Endothelial cell of umbilical vein (primary cell): ENCODE measurements at regions of chr7 and their contacts with region 1.

Region 1: GRCh38 chr7:25851332-25852210 is 300.4 kb upstream of the NFE2L3 start:
- DNase-seq: peak; percentile 79
- H3K4me3 ChIP-seq: no peak overlapping the region
- H3K27ac ChIP-seq: no peak overlapping the region
- H3K4me1 ChIP-seq: peaks cover 30% of the 10 kb centered on the region
- H3K27me3 ChIP-seq: peaks cover 9 to 11% of the 10 kb centered on the region in 2 experiments
- CTCF ChIP-seq: peak; percentile 77 to 87
- POLR2A ChIP-seq: no peak

Region 2: GRCh38 chr7:25259587-25260243 is 591.9 kb before region 1 on chr7:
- CTCF ChIA-PET with region 1: interaction called, 17 read pairs
- POLR2A ChIA-PET with region 1: no interaction called
- dilution Hi-C with region 1: no loop called
- intact Hi-C with region 1: loop called (anchors 1 kb)
- DNase-seq: peak; percentile 61
- H3K4me3 ChIP-seq: no peak overlapping the region
- H3K27ac ChIP-seq: no peak overlapping the region
- H3K4me1 ChIP-seq: no peaks in the 10 kb centered on the region
- H3K27me3 ChIP-seq: no peaks in the 10 kb centered on the region
- CTCF ChIP-seq: peak; percentile 77 to 82
- POLR2A ChIP-seq: no peak

Region 3: DNA sequence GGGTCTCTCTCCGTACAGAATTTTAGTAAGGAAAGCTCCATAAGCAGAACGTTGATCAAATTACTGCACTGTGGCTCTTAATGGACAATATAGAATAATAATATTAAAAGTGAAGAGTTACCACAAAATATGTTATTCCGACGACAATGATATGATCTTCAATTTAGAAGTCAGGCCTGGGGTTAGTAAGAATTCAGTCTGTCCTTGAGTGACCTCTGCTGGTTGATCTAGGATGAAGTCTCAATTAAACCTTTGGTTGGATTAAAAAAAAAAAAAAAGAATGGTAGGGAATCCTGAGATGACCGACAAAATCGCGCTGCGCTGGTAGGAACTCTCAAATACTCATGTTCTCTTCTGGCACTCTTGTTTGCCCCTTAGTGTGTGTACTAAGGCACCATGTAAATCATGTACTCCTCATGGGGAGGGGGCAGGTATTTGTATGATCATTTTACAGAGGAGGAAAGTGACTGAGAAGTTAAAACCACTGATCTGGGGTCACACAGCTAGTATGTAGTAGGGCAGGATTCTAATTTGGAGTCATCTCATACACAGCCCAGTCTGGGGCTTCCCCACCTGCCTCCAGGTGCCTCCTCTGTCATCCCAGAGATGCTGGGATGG is 462.0 kb before region 1 on chr7:
- CTCF ChIA-PET with region 1: interaction called, 27 read pairs
- POLR2A ChIA-PET with region 1: no interaction called
- dilution Hi-C with region 1: no loop called
- intact Hi-C with region 1: loop called (anchors 1 kb)
- DNase-seq: peak; percentile 44
- H3K4me3 ChIP-seq: no peak overlapping the region
- H3K27ac ChIP-seq: no peak overlapping the region
- H3K4me1 ChIP-seq: no peaks in the 10 kb centered on the region
- H3K27me3 ChIP-seq: peaks cover 2 to 3% of the 10 kb centered on the region in 2 experiments
- CTCF ChIP-seq: peak; percentile 23 to 40
- POLR2A ChIP-seq: no peak

Region 4: GRCh38 chr7:25720427-25720826 is 131.1 kb before region 1 on chr7:
- CTCF ChIA-PET with region 1: no interaction called
- POLR2A ChIA-PET with region 1: no interaction called
- dilution Hi-C with region 1: no loop called
- intact Hi-C with region 1: loop called (anchors 5 kb)
- DNase-seq: peak; percentile 37
- H3K4me3 ChIP-seq: no peak overlapping the region
- H3K27ac ChIP-seq: no peak overlapping the region
- H3K4me1 ChIP-seq: no peaks in the 10 kb centered on the region
- H3K27me3 ChIP-seq: no peaks in the 10 kb centered on the region
- CTCF ChIP-seq: peak; percentile 9 to 30
- POLR2A ChIP-seq: no peak

Region 5: GRCh38 chr7:25831831-25832411 is 19.6 kb before region 1 on chr7:
- CTCF ChIA-PET with region 1: interaction called, 3 read pairs
- POLR2A ChIA-PET with region 1: no interaction called
- dilution Hi-C with region 1: no loop called
- intact Hi-C with region 1: loop called (anchors 2 kb)
- DNase-seq: no peak
- H3K4me3 ChIP-seq: no peak overlapping the region
- H3K27ac ChIP-seq: no peak overlapping the region
- H3K4me1 ChIP-seq: peaks cover 5% of the 10 kb centered on the region
- H3K27me3 ChIP-seq: no peaks in the 10 kb centered on the region
- CTCF ChIP-seq: no peak
- POLR2A ChIP-seq: no peak

Region 6: DNA sequence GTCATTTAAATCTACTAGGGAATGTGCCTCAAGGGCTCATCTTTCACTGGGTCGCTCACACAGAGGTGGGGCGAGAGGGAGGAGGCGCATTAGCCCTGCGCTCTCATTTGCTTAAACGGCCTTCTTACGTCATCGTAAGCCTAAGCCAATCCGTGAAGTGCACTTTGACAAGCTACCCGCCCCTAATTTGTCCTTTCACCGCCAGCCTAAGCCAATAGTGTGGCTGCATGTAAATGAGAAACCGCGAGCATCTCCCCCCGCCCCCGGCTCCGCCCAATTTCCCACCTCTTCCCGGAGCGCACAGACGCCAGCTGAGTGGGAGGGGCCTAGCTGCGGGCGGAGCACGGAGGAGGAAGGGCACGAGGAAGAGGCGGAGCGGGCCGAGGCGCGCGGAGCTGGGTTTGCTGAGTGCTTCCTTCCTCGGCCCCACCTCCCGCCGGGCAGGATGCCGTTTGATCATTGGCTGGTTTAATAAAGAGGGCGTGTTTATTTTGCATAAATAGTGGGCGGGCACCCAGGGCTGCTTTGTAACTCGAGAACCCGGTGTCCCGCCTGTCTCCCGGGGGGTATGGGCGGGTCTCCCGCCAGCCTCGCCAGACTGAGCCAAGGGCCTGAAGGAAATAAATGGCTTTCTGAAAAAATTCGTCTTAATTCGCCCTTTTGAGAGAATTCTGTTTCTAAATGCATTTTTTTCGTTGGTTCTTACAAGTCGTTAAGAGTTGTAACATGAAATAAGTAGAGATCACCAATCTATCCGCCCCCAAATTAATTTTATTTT is 10.9 kb after region 1 on chr7:
- CTCF ChIA-PET with region 1: interaction called, 12 read pairs
- POLR2A ChIA-PET with region 1: no interaction called
- dilution Hi-C with region 1: no loop called
- intact Hi-C with region 1: no loop called
- DNase-seq: peak; percentile 100
- H3K4me3 ChIP-seq: peak overlapping the region in 1 of 3 experiments; percentile 43
- H3K27ac ChIP-seq: no peak overlapping the region
- H3K4me1 ChIP-seq: peaks cover 6% of the 10 kb centered on the region
- H3K27me3 ChIP-seq: peaks cover 60 to 83% of the 10 kb centered on the region in 2 experiments
- CTCF ChIP-seq: no peak
- POLR2A ChIP-seq: no peak